ENCODE measurements at regions of chr2 and their contacts with region 1.

Region 1: DNA sequence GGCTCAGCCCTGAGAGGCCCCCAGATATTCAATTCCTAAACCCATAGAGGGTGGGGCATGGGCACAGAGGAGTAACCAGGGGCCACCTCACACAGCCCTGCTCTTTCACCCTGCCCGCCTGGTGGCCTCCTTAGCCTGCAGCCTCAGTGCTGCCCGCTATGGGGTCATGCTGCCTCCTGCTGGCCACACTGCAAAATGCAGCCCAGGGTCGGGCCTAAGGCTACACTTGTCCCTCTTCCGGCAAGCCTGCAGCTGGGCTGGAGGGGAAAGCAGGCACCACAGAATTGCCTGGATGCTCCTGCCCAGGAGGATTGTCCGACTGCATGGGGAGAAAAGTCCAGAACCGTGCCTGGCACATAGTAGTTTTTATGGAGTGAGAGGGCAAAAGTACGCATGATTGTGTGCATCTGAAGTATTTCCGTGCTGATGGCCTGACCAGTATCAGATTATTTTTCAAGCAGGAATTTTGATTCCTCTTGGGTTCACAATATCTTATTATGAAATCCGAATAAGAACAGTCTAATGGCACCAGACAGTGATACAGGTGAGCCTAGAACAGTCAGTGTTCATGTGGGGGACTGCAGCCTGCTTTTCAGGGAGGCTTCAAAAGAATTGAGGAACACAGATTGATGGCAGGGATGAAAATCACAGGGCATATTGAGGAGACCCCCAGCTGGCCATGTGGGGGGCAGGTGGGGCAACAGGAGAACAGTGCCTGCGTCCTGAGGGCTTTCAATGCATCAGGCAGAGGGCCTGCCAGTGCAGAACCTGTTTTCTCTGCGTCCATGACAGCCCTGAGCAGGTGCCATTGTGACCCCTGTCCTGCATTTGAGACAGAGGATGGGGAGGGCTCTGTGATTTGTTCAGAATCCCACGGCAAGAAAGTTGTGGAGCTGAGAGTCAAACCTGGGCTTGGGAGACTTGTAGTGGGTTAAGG is 51.2 kb upstream of the ALPP start:
- DNase-seq: peak; percentile 88
- ATAC-seq: peak; percentile 88 to 97 (median 92)
- H3K4me3 ChIP-seq: no peak overlapping the region
- H3K4me3 Mint-ChIP-seq: no peak overlapping the region
- H3K27ac ChIP-seq: no peak overlapping the region
- H3K27ac Mint-ChIP-seq: no peak overlapping the region
- H3K4me1 ChIP-seq: peaks cover 38% of the 10 kb centered on the region
- H3K4me1 Mint-ChIP-seq: peaks cover 5 to 16% of the 10 kb centered on the region in 2 donors
- H3K27me3 ChIP-seq: no peaks in the 10 kb centered on the region
- H3K27me3 Mint-ChIP-seq: no peaks in the 10 kb centered on the region
- CTCF ChIP-seq: peak; percentile 89

Region 2: DNA sequence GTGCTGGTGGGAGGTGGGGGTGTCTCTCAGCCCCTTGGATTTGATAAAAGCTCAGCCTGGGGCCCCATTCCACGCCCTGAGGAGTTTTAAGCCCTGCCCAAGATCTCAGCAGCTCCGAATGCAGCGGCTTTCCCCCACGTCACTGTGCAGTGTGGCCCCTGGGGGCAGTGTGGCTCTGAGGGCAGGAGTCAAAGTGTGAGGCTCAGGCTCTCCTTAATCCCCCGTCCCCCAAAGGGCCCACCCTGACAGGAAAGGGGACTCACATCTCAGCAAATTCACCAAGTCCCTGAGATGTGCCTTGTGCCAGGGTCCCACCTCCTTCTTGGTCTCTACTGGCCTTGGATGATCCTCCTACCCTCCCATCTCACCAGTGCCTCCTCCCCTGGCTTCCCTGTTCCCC is 426.4 kb before region 1 on chr2:
- intact Hi-C with region 1: loop called (anchors 1 kb)
- DNase-seq: no peak
- ATAC-seq: no peak
- H3K4me3 ChIP-seq: no peak overlapping the region
- H3K4me3 Mint-ChIP-seq: no peak overlapping the region
- H3K27ac ChIP-seq: no peak overlapping the region
- H3K27ac Mint-ChIP-seq: no peak overlapping the region
- H3K4me1 ChIP-seq: peaks cover 3% of the 10 kb centered on the region
- H3K4me1 Mint-ChIP-seq: no peaks in the 10 kb centered on the region
- H3K27me3 ChIP-seq: no peaks in the 10 kb centered on the region
- H3K27me3 Mint-ChIP-seq: peaks cover 0 to 4% of the 10 kb centered on the region in 2 donors
- CTCF ChIP-seq: no peak

Region 3: GRCh38 chr2:231925303-231926179 is 401.8 kb before region 1 on chr2:
- intact Hi-C with region 1: loop called (anchors 1 kb)
- DNase-seq: peak; percentile 71 to 83
- ATAC-seq: peak; percentile 74 to 90 (median 88)
- H3K4me3 ChIP-seq: no peak overlapping the region
- H3K4me3 Mint-ChIP-seq: peak overlapping the region; percentile 52
- H3K27ac ChIP-seq: no peak overlapping the region
- H3K27ac Mint-ChIP-seq: no peak overlapping the region
- H3K4me1 ChIP-seq: peaks cover 20% of the 10 kb centered on the region
- H3K4me1 Mint-ChIP-seq: peaks cover 0 to 5% of the 10 kb centered on the region in 2 donors
- H3K27me3 ChIP-seq: peaks cover 30% of the 10 kb centered on the region
- H3K27me3 Mint-ChIP-seq: peaks cover 48 to 54% of the 10 kb centered on the region in 2 donors
- CTCF ChIP-seq: peak; percentile 83

Region 4: DNA sequence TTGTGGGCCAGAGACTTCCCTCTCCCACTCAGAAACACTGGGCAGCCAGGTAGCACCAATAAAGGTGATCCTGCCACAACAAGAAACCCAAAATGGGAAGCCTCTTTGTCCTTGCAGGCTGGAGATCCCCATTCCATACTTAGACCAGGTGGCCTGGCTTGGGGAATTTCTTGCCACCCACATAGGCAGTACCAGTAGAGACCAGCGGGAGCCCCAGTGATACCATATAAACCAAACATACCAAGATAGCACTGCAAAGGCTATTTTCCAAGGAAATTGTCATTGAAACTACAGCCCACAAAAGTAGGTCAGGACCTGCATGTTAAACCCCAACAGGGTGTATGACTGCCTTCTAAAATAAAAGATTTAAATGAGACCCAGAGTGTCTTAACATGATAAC is 194.3 kb before region 1 on chr2:
- intact Hi-C with region 1: loop called (anchors 10 kb)
- DNase-seq: no peak
- ATAC-seq: no peak
- H3K4me3 ChIP-seq: no peak overlapping the region
- H3K4me3 Mint-ChIP-seq: no peak overlapping the region
- H3K27ac ChIP-seq: no peak overlapping the region
- H3K27ac Mint-ChIP-seq: no peak overlapping the region
- H3K4me1 ChIP-seq: no peaks in the 10 kb centered on the region
- H3K4me1 Mint-ChIP-seq: peaks cover 0 to 11% of the 10 kb centered on the region in 2 donors
- H3K27me3 ChIP-seq: no peaks in the 10 kb centered on the region
- H3K27me3 Mint-ChIP-seq: no peaks in the 10 kb centered on the region
- CTCF ChIP-seq: no peak

Region 5: GRCh38 chr2:232292395-232293154 is 34.8 kb before region 1 on chr2:
- intact Hi-C with region 1: loop called (anchors 5 kb)
- DNase-seq: peak; percentile 48 to 68
- ATAC-seq: peak in 2 of 3 donors; percentile 74 to 79
- H3K4me3 ChIP-seq: no peak overlapping the region
- H3K4me3 Mint-ChIP-seq: no peak overlapping the region
- H3K27ac ChIP-seq: no peak overlapping the region
- H3K27ac Mint-ChIP-seq: peak overlapping the region in 1 of 2 donors; percentile 50
- H3K4me1 ChIP-seq: peaks cover 14% of the 10 kb centered on the region
- H3K4me1 Mint-ChIP-seq: peaks cover 15% of the 10 kb centered on the region in 2 donors
- H3K27me3 ChIP-seq: no peaks in the 10 kb centered on the region
- H3K27me3 Mint-ChIP-seq: no peaks in the 10 kb centered on the region
- CTCF ChIP-seq: peak; percentile 74

Region 6: DNA sequence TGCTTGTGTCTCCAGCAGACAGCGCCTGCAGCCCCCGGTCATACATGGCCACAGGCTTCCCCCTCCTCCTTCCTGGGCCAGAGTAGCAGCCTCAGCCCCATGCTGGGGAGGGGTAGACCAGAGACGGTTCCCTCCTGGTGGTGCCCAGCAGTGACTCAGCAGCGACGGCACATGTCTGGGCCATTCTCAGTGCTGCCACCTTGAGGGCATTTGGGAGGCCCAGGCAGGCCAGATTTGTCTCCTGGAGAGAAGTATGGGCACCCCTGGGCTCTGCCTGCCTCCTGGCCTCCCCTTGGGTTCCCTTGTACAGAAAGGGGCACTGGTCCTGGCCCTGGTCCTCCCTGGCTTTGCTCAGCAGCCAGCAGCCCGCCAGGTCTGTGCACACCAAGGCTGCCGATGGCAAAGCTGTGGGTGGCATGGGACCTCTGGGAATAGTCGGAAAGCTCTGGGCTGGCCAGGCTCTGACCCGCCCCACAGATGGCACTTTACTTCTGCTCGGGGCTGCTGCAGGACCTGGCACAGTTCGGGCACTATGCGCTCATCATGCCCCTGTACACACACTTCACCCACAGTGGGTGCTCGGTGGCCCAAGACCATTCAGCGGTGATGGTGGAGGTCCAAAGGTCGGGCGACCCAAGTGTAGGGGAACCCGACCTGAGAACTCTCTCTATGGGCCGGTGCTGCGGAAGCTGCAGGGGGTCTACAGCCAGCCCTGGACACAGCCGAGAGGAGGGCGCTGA is 117.2 kb after region 1 on chr2:
- intact Hi-C with region 1: loop called (anchors 5 kb)
- DNase-seq: peak in 1 of 2 donors; percentile 77
- ATAC-seq: peak; percentile 34 to 56 (median 44)
- H3K4me3 ChIP-seq: no peak overlapping the region
- H3K4me3 Mint-ChIP-seq: no peak overlapping the region
- H3K27ac ChIP-seq: no peak overlapping the region
- H3K27ac Mint-ChIP-seq: no peak overlapping the region
- H3K4me1 ChIP-seq: peaks cover 11% of the 10 kb centered on the region
- H3K4me1 Mint-ChIP-seq: peaks cover 0 to 11% of the 10 kb centered on the region in 2 donors
- H3K27me3 ChIP-seq: no peaks in the 10 kb centered on the region
- H3K27me3 Mint-ChIP-seq: no peaks in the 10 kb centered on the region
- CTCF ChIP-seq: peak; percentile 48

Region 7: DNA sequence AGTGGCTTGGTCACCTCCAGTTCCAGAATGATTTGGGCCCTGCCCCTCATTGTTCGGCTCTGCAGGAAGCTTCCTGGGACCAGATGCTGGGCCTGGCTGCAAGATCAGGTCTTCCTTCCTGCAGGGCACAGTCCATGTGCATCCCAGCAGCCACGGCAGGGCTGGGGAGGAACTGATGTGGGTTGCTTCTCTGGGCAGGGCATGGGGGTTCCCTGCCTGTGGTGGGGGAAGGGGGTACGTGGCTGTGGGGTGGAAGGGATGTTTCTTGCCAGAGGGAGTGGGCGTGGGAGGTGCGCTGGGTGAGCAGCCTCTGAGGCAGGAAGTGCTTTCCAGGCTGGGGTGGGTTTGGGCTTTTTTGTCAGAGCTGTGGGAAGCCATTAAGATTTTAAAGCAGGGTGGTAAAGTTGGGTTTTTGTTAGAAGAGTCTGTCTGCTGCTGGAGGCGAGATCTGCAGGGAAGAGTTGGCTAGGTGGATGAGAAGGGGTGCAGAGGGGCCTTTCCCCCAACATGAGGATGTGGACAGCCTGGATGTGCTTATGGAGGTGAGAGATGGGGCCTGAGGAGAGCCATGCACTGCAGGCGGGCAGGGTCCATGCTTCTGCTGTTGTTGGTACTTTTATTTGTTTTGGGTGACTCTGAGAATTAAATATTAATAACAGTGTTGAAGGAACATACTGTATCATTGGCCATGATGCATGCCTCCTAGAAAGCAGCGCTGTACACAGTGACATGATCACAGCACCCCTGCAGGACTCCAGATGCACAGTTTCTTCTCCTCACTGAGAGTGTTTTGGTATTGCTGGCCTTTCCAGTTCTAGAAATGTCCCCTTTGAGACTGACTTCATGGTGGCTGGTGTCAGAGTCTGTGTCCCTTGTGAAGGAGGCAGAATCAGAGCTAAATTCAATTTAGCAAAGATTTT is 1072.2 kb after region 1 on chr2:
- intact Hi-C with region 1: no loop called
- DNase-seq: peak in 1 of 2 donors; percentile 68
- ATAC-seq: peak; percentile 45 to 57 (median 51)
- H3K4me3 ChIP-seq: no peak overlapping the region
- H3K4me3 Mint-ChIP-seq: peak overlapping the region; percentile 61
- H3K27ac ChIP-seq: peak overlapping the region; percentile 28
- H3K27ac Mint-ChIP-seq: peak overlapping the region; percentile 76 to 82
- H3K4me1 ChIP-seq: peaks cover 31% of the 10 kb centered on the region
- H3K4me1 Mint-ChIP-seq: peaks cover 65 to 70% of the 10 kb centered on the region in 2 donors
- H3K27me3 ChIP-seq: no peaks in the 10 kb centered on the region
- H3K27me3 Mint-ChIP-seq: no peaks in the 10 kb centered on the region
- CTCF ChIP-seq: no peak

Measured in natural killer cell (primary cell).